IMR-90 (cell line): ENCODE measurements at regions of chr6 and their contacts with region 1.

Region 1: DNA sequence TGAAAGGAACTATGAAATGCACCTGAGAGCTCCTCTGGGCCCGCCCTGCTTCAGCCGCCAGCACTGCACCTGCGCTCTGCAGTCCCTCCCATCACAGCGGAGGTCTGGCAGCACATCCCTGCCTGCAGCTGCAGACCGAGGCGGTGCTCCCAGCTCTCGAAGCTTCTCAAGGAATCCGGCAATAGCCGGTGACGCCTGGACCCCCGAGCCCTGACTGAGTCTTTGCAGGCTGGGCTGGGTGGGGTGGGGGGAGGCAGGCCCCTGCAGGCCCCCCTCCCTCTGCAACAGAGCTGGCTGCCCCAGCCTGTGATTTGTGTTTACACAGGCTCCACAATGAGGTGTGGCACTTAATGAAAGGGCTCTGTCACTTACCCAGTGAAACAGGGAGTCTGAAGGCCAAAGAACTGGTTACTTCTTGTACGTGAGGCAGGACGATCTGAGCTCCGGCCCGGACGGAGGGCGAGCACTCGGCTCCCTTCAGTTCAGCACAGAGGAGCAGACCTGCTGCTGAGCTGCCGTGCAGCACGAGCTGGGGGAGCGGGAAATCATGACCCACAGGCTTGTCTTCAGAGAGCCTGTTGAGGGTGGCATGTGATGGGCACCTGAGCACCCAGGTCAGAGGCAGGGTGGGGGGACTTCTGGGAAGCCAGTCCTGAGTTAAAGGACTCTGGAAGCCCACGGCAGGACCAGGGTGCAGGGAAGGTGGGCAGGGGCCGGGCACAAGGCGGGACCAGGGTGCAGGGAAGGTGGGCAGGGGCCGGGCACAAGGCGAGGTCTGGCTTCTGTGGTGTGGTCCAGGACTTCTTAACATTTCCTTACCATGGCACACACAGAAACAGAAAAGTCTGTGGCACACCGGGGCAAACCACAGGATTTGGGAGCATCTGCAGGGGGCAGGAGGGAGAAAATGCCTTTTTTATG is 192.3 kb upstream of the THBS2 start:
- DNase-seq: no peak
- ATAC-seq: no peak
- H3K4me3 ChIP-seq: no peak overlapping the region
- H3K27ac ChIP-seq: no peak overlapping the region
- H3K4me1 ChIP-seq: peaks cover 7% of the 10 kb centered on the region
- H3K27me3 ChIP-seq: no peaks in the 10 kb centered on the region
- CTCF ChIP-seq: no peak
- POLR2A ChIP-seq: no peak
- RAD21 ChIP-seq: no peak

Region 2: GRCh38 chr6:169145991-169146501 is 299.9 kb before region 1 on chr6:
- CTCF ChIA-PET with region 1: no interaction called
- POLR2A ChIA-PET with region 1: no interaction called
- dilution Hi-C with region 1: no loop called
- in situ Hi-C with region 1: no loop called
- intact Hi-C with region 1: no loop called
- DNase-seq: peak; percentile 59
- ATAC-seq: peak; percentile 30; the same call in 1 of the 2 replicates
- H3K4me3 ChIP-seq: no peak overlapping the region
- H3K27ac ChIP-seq: peak overlapping the region; percentile 92; the same call in 1 of the 2 replicates
- H3K4me1 ChIP-seq: peaks cover 23% of the 10 kb centered on the region
- H3K27me3 ChIP-seq: no peaks in the 10 kb centered on the region
- CTCF ChIP-seq: no peak
- POLR2A ChIP-seq: no peak
- RAD21 ChIP-seq: no peak

Region 3: DNA sequence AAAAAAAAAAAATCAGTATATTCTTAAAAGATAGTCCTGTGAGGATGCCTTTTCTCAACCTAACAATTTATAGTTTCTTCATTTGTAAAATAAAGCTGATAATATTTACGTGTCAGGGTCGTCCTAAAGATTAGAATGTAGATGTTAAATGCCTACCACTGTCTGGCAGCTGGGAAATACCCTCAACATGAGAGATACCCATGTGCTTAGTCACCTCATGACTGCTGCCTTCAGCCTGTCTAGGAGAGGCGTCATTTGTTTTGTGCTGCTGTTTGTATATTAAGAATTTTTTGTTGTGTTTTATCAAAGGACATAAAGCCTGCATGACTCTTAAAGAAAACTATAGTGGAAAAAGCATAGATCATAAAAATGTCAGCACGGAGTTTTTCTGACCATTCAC is 870.1 kb after region 1 on chr6:
- CTCF ChIA-PET with region 1: no interaction called
- POLR2A ChIA-PET with region 1: no interaction called
- dilution Hi-C with region 1: no loop called
- in situ Hi-C with region 1: no loop called
- intact Hi-C with region 1: loop called (anchors 10 kb)
- DNase-seq: peak; percentile 38
- ATAC-seq: no peak
- H3K4me3 ChIP-seq: no peak overlapping the region
- H3K27ac ChIP-seq: no peak overlapping the region
- H3K4me1 ChIP-seq: peaks cover 7% of the 10 kb centered on the region
- H3K27me3 ChIP-seq: no peaks in the 10 kb centered on the region
- CTCF ChIP-seq: no peak
- POLR2A ChIP-seq: no peak
- RAD21 ChIP-seq: no peak